ENCODE measurements at regions of chr15 and their contacts with region 1.

Region 1: GRCh38 chr15:50496692-50497091 is 49.8 kb downstream of the USP50 start:
- DNase-seq: no peak
- ATAC-seq: no peak
- H3K4me3 ChIP-seq: no peak overlapping the region
- H3K27ac ChIP-seq: no peak overlapping the region
- H3K4me1 ChIP-seq: no peaks in the 10 kb centered on the region
- H3K27me3 ChIP-seq: no peaks in the 10 kb centered on the region
- CTCF ChIP-seq: no peak
- POLR2A ChIP-seq: no peak

Region 2: GRCh38 chr15:50463423-50464358 is 33.0 kb before region 1 on chr15:
- in situ Hi-C with region 1: no loop called
- intact Hi-C with region 1: no loop called
- DNase-seq: no peak
- ATAC-seq: no peak
- H3K4me3 ChIP-seq: no peak overlapping the region
- H3K27ac ChIP-seq: no peak overlapping the region
- H3K4me1 ChIP-seq: no peaks in the 10 kb centered on the region
- H3K27me3 ChIP-seq: no peaks in the 10 kb centered on the region
- CTCF ChIP-seq: no peak
- POLR2A ChIP-seq: no peak

Region 3: GRCh38 chr15:50513001-50513400 is 16.3 kb after region 1 on chr15:
- in situ Hi-C with region 1: no loop called
- intact Hi-C with region 1: loop called (anchors 1 kb)
- DNase-seq: no peak
- ATAC-seq: no peak
- H3K4me3 ChIP-seq: no peak overlapping the region
- H3K27ac ChIP-seq: no peak overlapping the region
- H3K4me1 ChIP-seq: no peaks in the 10 kb centered on the region
- H3K27me3 ChIP-seq: no peaks in the 10 kb centered on the region
- CTCF ChIP-seq: no peak
- POLR2A ChIP-seq: no peak

Region 4: DNA sequence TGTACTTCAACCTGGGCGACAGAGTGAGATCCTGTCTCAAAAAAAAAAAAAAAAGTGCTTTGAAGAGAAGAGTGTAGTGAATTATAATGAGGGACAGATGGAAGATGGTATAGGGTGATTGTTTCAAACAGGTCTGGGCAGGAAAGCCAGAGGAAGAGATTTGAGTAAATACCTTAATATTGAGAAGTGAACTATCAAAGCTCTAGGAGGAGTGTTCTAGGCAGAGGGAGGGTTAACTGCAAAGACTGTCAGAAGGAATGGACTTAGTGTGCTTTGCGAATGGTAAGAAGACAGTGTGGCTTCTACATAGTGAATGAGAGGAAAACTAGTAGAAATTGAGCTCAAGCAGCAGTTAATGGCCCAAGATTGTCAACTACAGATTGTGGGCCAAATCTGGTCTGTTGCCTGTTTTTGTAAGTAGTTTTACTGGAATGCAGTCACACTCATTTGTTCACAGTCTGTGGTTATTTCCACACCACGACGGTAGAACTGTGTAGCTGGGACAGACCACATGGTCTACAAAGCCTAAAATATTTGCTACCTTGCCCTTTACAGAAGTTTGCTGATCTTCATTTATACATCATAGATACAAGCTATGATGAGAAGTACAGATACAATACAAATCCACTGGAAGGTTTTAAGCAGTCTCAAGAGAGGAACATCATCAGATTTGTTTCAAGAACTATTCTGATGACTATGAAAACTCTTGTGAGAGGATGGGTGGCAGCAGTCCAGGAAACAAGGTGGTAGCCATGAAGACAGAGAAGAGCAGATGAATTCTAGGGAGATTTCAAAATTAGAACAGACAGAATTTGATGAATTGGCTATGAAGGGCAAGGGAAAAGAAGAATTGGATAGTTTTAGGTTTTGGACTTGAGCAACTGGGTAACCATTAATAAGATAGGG is 66.3 kb after region 1 on chr15:
- in situ Hi-C with region 1: no loop called
- intact Hi-C with region 1: loop called (anchors 10 kb)
- DNase-seq: no peak
- ATAC-seq: no peak
- H3K4me3 ChIP-seq: no peak overlapping the region
- H3K27ac ChIP-seq: no peak overlapping the region
- H3K4me1 ChIP-seq: no peaks in the 10 kb centered on the region
- H3K27me3 ChIP-seq: no peaks in the 10 kb centered on the region
- CTCF ChIP-seq: no peak
- POLR2A ChIP-seq: no peak